Breast epithelium (tissue), 4 donors: ENCODE measurements at regions of chr15 and their contacts with region 1.

Region 1: DNA sequence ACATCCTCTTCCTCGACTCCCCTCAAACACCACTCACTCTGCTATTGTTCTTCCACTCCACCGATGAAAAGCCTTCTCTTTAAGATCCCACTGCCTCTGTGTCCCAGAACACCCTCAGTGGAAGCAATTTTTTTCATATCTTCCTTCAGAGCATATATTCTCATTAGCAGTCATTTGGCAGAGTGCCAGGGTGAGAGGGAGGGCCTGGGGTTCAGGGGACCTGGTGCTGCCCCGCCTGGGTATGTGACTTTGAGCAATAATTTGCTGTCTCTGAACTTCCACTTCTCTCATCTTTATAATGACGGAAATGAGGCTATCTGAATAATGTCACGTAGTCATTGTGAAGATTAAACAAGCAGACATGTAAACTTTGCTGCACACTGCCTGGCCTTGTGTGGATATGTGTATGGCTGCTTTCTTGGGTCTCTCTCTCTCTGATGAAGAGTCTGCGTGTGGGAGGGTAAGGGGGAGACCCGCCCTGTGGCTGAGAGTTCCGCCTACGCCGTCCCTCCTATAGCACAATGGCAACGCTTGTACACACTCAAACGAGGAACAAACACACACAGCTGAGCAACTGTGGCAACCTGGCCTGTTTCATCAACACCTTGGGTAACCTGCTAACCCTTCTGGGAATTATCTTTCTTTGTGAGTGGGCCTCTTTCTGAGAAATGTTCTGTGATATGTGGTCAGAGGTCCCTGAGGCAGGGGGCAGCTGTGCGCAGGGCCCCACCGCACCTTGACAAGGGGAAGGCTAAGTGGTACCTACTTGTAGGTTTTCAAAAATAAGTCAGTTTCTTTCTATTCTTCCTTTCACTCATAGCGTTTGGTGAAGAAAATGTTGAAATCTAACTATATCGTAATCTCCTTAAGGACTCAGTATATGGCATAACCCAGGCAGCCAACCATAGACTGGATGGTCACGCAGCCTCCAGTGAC is 369.8 kb downstream of the SV2B start:
- DNase-seq: no peak
- H3K4me3 ChIP-seq: no peak overlapping the region
- H3K27ac ChIP-seq: no peak overlapping the region
- H3K4me1 ChIP-seq: no peaks in the 10 kb centered on the region
- H3K27me3 ChIP-seq: no peaks in the 10 kb centered on the region
- CTCF ChIP-seq: no peak
- POLR2A ChIP-seq: no peak

Region 2: DNA sequence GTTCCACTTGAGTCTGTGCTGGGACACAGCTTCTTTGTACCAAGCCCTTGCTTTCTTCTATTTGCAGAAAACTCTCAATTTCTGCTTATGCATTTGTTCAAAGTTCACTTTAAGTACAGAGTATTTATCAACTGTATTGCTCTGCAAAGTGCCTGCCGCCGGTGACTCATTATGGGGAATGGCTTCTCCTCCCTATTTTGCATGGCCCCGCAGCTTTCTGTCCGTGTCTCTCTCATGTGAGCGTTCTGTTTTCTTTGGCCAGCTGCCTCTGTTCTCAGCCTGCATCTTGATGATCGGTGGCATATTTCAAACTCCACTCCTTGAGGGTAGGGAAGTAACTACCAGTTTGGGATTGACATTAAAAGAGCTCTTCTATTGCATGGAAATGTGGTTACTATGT is 895.2 kb after region 1 on chr15:
- intact Hi-C with region 1: loop called (anchors 5 kb)
- DNase-seq: no peak
- H3K4me3 ChIP-seq: no peak overlapping the region
- H3K27ac ChIP-seq: no peak overlapping the region
- H3K4me1 ChIP-seq: no peaks in the 10 kb centered on the region
- H3K27me3 ChIP-seq: peaks cover 0 to 3% of the 10 kb centered on the region in 2 donors
- CTCF ChIP-seq: no peak
- POLR2A ChIP-seq: no peak

Region 3: DNA sequence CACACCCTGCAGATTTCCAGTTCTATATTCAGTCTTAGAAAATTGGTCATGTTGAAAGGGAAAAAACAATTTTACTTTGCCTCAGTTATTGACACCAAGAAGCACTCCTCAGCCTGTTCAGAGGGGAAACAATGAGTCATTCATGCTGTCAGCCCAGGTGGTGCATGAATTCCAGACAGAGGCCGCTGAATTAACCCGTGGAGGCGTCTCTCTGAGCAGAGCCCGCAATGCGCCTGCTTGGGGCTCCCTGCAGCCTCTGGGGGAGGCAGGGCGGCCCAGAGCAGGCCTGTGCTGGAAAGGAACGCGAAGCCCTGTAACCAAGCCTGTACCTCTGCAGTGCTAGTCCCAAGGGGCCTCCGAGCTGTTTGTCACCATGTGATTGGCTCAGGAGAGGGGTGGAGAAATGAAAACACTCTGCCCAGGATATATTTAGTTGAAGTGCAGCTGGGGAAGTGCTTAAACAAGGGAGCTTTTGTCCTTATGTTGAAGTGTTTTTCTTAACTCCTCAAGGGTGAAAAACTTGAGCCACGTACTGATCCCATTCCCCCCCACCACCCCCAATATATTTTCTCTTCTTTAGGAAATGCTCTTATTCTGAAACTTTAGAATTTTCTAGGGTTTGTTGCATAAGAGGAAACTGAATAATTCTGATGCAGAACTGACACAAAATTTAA is 1361.9 kb after region 1 on chr15:
- intact Hi-C with region 1: loop called (anchors 10 kb)
- DNase-seq: peak; percentile 82 to 94
- H3K4me3 ChIP-seq: peak overlapping the region; percentile 18 to 52 (median 39)
- H3K27ac ChIP-seq: peak overlapping the region; percentile 92 to 95
- H3K4me1 ChIP-seq: peaks cover 6% of the 10 kb centered on the region in 2 donors
- H3K27me3 ChIP-seq: no peaks in the 10 kb centered on the region
- CTCF ChIP-seq: no peak
- POLR2A ChIP-seq: peak; percentile 45